B cell (primary cell): ENCODE measurements at regions of chr14 and their contacts with region 1.

Region 1: DNA sequence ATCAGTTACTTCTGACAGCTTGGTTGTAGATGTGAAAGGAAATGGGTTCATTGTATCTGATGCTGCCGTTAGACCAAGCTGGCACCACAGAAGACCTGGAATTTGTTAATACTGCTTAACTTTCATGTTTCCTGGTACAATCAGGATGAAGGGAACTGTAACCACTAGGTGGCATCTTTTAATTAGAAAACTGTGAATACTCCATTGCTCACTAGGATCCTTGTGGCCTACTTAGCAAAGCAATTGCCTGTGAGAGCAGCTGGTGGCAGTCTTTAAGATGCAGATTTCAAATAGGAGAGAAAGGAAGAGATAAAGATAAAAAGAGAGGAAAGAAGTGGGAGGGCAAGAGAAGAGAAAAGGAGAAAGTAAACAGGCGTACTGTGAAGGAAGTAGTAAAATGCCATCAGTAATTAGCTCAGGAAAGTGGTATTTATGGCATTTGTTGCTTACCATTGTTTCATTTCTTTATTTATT is 114.5 kb downstream of the RAD51B start:
- DNase-seq: peak; percentile 63
- ATAC-seq: peak; percentile 65
- H3K4me3 ChIP-seq: no peak overlapping the region
- H3K4me3 Mint-ChIP-seq: no peak overlapping the region
- H3K27ac ChIP-seq: no peak overlapping the region
- H3K27ac Mint-ChIP-seq: no peak overlapping the region
- H3K4me1 ChIP-seq: no peaks in the 10 kb centered on the region
- H3K4me1 Mint-ChIP-seq: peaks cover 2% of the 10 kb centered on the region
- H3K27me3 ChIP-seq: no peaks in the 10 kb centered on the region
- H3K27me3 Mint-ChIP-seq: no peaks in the 10 kb centered on the region
- CTCF ChIP-seq: peak; percentile 77

Region 2: GRCh38 chr14:67970923-67971322 is 36.9 kb after region 1 on chr14:
- CTCF ChIA-PET with region 1: no interaction called
- POLR2A ChIA-PET with region 1: no interaction called
- intact Hi-C with region 1: no loop called
- DNase-seq: no peak
- ATAC-seq: no peak
- H3K4me3 ChIP-seq: no peak overlapping the region
- H3K4me3 Mint-ChIP-seq: no peak overlapping the region
- H3K27ac ChIP-seq: no peak overlapping the region
- H3K27ac Mint-ChIP-seq: no peak overlapping the region
- H3K4me1 ChIP-seq: no peaks in the 10 kb centered on the region
- H3K4me1 Mint-ChIP-seq: no peaks in the 10 kb centered on the region
- H3K27me3 ChIP-seq: no peaks in the 10 kb centered on the region
- H3K27me3 Mint-ChIP-seq: no peaks in the 10 kb centered on the region
- CTCF ChIP-seq: no peak

Region 3: GRCh38 chr14:68824517-68825347 is 890.7 kb after region 1 on chr14:
- CTCF ChIA-PET with region 1: interaction called, 16 read pairs
- POLR2A ChIA-PET with region 1: no interaction called
- intact Hi-C with region 1: no loop called
- DNase-seq: peak; percentile 44
- ATAC-seq: no peak
- H3K4me3 ChIP-seq: no peak overlapping the region
- H3K4me3 Mint-ChIP-seq: no peak overlapping the region
- H3K27ac ChIP-seq: no peak overlapping the region
- H3K27ac Mint-ChIP-seq: no peak overlapping the region
- H3K4me1 ChIP-seq: peaks cover 25 to 48% of the 10 kb centered on the region in 2 donors
- H3K4me1 Mint-ChIP-seq: peaks cover 46% of the 10 kb centered on the region
- H3K27me3 ChIP-seq: no peaks in the 10 kb centered on the region
- H3K27me3 Mint-ChIP-seq: no peaks in the 10 kb centered on the region
- CTCF ChIP-seq: peak; percentile 61

Region 4: DNA sequence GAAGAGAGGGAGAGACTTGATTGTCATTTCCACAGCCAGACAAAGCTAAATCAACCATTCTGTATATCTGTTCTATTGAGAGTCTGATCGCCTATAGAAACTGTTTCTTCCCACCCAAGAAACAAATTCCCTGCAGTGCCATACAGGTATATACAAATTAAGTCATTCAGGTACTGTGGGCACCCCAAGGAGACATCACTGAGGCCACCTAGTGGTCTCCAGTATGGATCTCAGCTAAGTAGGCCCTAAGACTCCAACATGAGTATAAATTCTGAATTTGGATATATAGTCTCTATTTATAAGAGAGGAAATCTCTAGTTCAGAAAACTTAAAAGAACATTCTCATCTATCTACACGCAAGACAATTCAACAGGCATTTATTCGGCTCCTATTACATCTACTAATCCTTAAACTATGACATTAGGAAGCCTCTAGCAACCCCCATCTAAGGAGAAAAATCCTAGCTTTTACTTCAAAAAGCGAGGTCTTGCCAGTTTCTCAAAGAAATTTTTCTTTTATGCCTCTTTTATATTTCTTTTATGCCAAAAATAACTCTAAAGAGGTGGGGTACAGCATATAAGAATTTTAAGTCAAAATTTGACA is 1156.2 kb after region 1 on chr14:
- CTCF ChIA-PET with region 1: interaction called, 7 read pairs
- POLR2A ChIA-PET with region 1: no interaction called
- intact Hi-C with region 1: loop called (anchors 2 kb)
- DNase-seq: peak; percentile 24
- ATAC-seq: no peak
- H3K4me3 ChIP-seq: no peak overlapping the region
- H3K4me3 Mint-ChIP-seq: no peak overlapping the region
- H3K27ac ChIP-seq: no peak overlapping the region
- H3K27ac Mint-ChIP-seq: no peak overlapping the region
- H3K4me1 ChIP-seq: no peaks in the 10 kb centered on the region
- H3K4me1 Mint-ChIP-seq: no peaks in the 10 kb centered on the region
- H3K27me3 ChIP-seq: no peaks in the 10 kb centered on the region
- H3K27me3 Mint-ChIP-seq: no peaks in the 10 kb centered on the region
- CTCF ChIP-seq: peak; percentile 58

Region 5: GRCh38 chr14:69107407-69108003 is 1173.5 kb after region 1 on chr14:
- CTCF ChIA-PET with region 1: interaction called, 19 read pairs
- POLR2A ChIA-PET with region 1: no interaction called
- intact Hi-C with region 1: no loop called
- DNase-seq: peak; percentile 44
- ATAC-seq: no peak
- H3K4me3 ChIP-seq: no peak overlapping the region
- H3K4me3 Mint-ChIP-seq: no peak overlapping the region
- H3K27ac ChIP-seq: no peak overlapping the region
- H3K27ac Mint-ChIP-seq: no peak overlapping the region
- H3K4me1 ChIP-seq: no peaks in the 10 kb centered on the region
- H3K4me1 Mint-ChIP-seq: no peaks in the 10 kb centered on the region
- H3K27me3 ChIP-seq: no peaks in the 10 kb centered on the region
- H3K27me3 Mint-ChIP-seq: no peaks in the 10 kb centered on the region
- CTCF ChIP-seq: peak; percentile 64